Activated B cell treated with CpG ODN at 0.5 μM for 24 hours (primary cell): ENCODE measurements at regions of chrX and their contacts with region 1.

Region 1: DNA sequence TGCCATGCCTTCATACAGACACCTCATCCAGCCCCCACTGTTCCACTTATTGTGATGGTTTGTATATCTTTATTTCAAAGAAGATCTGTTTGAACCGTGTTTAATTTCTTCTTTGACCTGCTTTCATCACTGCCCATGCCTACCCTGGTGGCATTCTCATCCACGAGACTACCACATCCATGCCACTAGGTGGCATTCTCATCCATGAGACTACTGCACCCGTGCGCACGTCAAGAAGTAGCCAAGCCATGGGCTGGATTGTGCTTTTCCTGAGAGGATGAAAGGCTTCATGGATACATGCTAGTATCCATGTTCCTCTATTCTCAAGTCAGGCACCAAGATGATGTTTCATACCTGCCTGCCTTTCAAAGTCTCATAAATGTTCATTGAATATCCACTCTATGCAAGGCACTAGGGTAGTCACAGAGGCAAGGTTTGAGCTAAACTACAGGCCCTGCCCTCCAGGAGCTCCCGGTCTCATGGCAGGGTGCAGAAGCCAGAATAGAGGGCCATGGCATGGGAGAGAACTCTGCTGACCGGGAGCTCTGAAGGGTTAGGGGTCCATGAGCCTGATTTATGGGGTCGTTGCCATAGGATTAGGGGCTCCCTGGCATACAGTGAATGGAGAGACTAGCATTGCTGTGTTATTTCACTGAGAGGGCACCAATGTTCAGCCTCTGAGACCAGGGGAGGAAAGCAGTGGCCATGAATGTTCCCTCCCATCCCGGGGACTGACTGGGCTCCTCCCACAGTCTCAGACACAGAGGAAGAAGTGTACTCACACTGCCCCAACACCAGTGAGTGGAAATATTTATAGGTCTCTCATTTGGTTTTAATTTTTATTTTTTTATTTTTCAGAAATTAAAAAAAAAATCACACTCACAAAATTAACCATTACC is 24.8 kb upstream of the EOLA2 start:
- DNase-seq: no peak
- ATAC-seq: peak; percentile 54
- H3K4me3 Mint-ChIP-seq: no peak overlapping the region
- H3K27ac Mint-ChIP-seq: no peak overlapping the region
- H3K4me1 Mint-ChIP-seq: no peaks in the 10 kb centered on the region
- H3K27me3 Mint-ChIP-seq: no peaks in the 10 kb centered on the region
- CTCF ChIP-seq: no peak

Region 2: GRCh38 chrX:148713981-148714380 is 1249.1 kb before region 1 on chrX:
- CTCF ChIA-PET with region 1: no interaction called
- POLR2A ChIA-PET with region 1: no interaction called
- intact Hi-C with region 1: no loop called
- DNase-seq: no peak
- ATAC-seq: no peak
- H3K4me3 Mint-ChIP-seq: no peak overlapping the region
- H3K27ac Mint-ChIP-seq: no peak overlapping the region
- H3K4me1 Mint-ChIP-seq: no peaks in the 10 kb centered on the region
- H3K27me3 Mint-ChIP-seq: no peaks in the 10 kb centered on the region
- CTCF ChIP-seq: no peak

Region 3: GRCh38 chrX:149522916-149523315 is 440.2 kb before region 1 on chrX:
- CTCF ChIA-PET with region 1: no interaction called
- POLR2A ChIA-PET with region 1: no interaction called
- intact Hi-C with region 1: no loop called
- DNase-seq: no peak
- ATAC-seq: no peak
- H3K4me3 Mint-ChIP-seq: no peak overlapping the region
- H3K27ac Mint-ChIP-seq: no peak overlapping the region
- H3K4me1 Mint-ChIP-seq: peaks cover 12% of the 10 kb centered on the region
- H3K27me3 Mint-ChIP-seq: peaks cover 2% of the 10 kb centered on the region
- CTCF ChIP-seq: no peak

Region 4: DNA sequence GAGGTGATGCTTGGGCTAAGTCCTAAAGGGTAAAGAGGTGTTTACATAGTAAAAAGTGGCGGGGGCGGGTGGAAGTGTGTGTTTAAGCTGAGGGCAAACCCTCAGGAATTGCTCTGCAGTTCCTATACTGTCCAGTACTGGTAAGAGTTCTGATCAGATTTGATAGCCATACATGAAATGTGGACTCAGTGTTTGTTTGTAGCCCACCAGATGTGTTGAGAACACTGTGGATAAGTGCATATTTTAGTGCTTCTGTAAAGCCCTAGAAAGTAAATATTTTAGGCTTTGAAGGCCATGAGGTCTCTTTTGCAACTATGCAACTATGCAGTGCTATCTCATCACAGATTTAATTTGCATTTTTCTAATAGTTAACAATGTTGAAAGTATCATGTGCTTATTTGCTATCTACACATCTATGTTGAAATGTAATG is 55.8 kb after region 1 on chrX:
- CTCF ChIA-PET with region 1: no interaction called
- POLR2A ChIA-PET with region 1: no interaction called
- intact Hi-C with region 1: no loop called
- DNase-seq: no peak
- ATAC-seq: no peak
- H3K4me3 Mint-ChIP-seq: no peak overlapping the region
- H3K27ac Mint-ChIP-seq: no peak overlapping the region
- H3K4me1 Mint-ChIP-seq: no peaks in the 10 kb centered on the region
- H3K27me3 Mint-ChIP-seq: no peaks in the 10 kb centered on the region
- CTCF ChIP-seq: no peak

Region 5: DNA sequence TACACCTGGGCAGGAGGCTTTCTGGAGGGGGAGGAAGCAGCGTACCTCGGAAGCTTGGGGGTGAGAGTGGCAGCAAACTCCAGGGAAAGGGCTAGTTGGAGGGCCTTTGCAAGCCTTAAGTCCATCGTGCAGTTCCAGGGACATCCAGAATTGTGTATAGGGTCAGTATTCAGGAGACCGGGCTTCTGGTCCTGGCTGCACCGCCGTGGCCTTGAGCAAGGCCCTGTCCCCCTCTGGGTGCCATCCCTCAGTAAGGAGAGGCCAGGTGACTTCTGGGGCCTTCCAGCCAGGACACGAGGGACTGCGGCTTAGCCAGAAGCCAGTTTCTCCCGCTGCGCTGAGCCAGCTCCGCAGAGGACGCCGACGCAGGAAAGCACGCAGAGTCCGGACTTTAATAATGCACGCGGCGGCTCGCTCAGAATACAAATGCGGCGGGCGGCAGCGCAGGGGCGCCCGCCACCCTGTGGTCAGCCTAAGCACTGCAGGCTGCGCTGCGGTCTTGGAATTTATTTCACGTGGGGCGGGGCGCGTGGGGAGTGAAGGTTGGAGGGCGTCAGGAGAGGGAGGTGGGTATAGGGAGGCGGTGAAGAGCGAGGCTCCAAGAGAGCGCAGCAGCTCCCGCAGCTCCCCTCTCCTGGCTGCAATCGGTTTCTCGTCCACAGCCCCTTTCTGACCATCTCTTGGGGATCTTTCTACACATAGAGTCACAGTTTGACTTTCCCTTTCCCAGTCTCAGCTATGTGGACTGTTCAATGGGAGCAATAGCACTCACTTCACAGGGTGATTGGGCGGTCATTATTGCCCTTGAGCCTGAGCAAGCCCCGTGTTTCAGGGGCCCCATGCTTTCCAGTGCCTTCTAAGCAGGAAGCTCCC is 1119.2 kb after region 1 on chrX:
- CTCF ChIA-PET with region 1: no interaction called
- POLR2A ChIA-PET with region 1: no interaction called
- intact Hi-C with region 1: loop called (anchors 5 kb)
- DNase-seq: peak; percentile 45
- ATAC-seq: peak; percentile 83
- H3K4me3 Mint-ChIP-seq: peak overlapping the region; percentile 19
- H3K27ac Mint-ChIP-seq: no peak overlapping the region
- H3K4me1 Mint-ChIP-seq: peaks cover 6% of the 10 kb centered on the region
- H3K27me3 Mint-ChIP-seq: peaks cover 9% of the 10 kb centered on the region
- CTCF ChIP-seq: no peak